ENCODE measurements at regions of chr17 and their contacts with region 1.

Region 1: GRCh38 chr17:50397111-50397918 is at the start of gene LRRC59:
- DNase-seq: peak; percentile 99
- H3K4me3 ChIP-seq: peak within 1 kb of the TSS; percentile 91 to 99
- H3K27ac ChIP-seq: peak within 1 kb of the TSS; percentile 74 to 83
- H3K4me1 ChIP-seq: peaks cover 10 to 23% of the 10 kb centered on the region in 2 experiments
- H3K27me3 ChIP-seq: no peaks in the 10 kb centered on the region; the same call in 1 of the 2 replicates
- CTCF ChIP-seq: peak; percentile 95
- EP300 ChIP-seq: no peak
- RAD21 ChIP-seq: peak; percentile 42; the same call in 1 of the 2 replicates
- polyA plus RNA-seq, gene LRRC59: 122 and 137 TPM in 2 replicates

Region 2: DNA sequence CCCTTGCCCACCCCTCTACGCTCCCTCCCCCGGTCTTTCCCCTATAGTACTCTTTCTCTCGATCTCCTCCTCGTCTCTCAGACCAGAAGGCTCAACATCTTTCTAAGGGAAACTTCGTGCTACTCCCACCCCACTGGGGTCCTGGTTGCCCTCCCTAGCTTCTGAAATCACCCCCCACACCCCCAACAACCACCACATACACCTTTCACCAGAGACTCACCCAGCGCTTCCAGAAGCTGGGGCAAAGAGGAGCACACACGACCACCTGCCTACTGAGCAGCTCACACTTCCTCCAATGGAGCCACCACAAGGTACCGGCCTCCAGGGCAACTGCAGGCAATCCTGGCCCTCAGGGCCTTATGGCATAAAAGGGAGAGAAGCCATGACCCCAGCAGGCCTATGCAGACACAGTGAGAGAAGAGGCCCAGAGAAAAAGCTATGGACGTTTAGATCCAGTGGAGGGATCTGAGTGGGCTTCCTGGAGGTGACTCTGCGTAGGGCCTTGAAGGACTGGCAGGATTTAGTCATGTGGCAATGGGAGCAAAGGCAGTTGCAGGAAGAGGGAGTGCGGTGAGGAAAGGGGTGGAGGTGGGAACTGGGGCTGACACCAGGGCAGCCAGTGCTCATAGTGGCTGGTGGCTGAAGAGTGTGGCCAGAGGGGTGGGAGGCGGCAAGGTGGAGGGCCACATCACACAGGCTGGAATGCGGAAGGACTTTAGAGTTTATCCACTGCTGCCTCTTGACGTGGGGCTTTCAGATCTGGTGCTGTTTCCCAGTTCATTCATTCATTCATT is 135.1 kb before region 1 on chr17:
- CTCF ChIA-PET with region 1: no interaction called
- POLR2A ChIA-PET with region 1: no interaction called
- DNase-seq: no peak
- H3K4me3 ChIP-seq: no peak overlapping the region
- H3K27ac ChIP-seq: no peak overlapping the region
- H3K4me1 ChIP-seq: peaks cover 42 to 56% of the 10 kb centered on the region in 2 experiments; a peak in 3 of 4 replicates
- H3K27me3 ChIP-seq: no peaks in the 10 kb centered on the region
- CTCF ChIP-seq: no peak
- EP300 ChIP-seq: no peak
- RAD21 ChIP-seq: no peak

Region 3: GRCh38 chr17:50297407-50297865 is 99.9 kb before region 1 on chr17:
- CTCF ChIA-PET with region 1: interaction called, 14 read pairs
- POLR2A ChIA-PET with region 1: no interaction called
- DNase-seq: peak; percentile 90
- H3K4me3 ChIP-seq: no peak overlapping the region; a peak in 1 of 4 replicates
- H3K27ac ChIP-seq: no peak overlapping the region
- H3K4me1 ChIP-seq: no peaks in the 10 kb centered on the region
- H3K27me3 ChIP-seq: no peaks in the 10 kb centered on the region
- CTCF ChIP-seq: peak; percentile 99
- EP300 ChIP-seq: no peak
- RAD21 ChIP-seq: peak; percentile 100

Region 4: DNA sequence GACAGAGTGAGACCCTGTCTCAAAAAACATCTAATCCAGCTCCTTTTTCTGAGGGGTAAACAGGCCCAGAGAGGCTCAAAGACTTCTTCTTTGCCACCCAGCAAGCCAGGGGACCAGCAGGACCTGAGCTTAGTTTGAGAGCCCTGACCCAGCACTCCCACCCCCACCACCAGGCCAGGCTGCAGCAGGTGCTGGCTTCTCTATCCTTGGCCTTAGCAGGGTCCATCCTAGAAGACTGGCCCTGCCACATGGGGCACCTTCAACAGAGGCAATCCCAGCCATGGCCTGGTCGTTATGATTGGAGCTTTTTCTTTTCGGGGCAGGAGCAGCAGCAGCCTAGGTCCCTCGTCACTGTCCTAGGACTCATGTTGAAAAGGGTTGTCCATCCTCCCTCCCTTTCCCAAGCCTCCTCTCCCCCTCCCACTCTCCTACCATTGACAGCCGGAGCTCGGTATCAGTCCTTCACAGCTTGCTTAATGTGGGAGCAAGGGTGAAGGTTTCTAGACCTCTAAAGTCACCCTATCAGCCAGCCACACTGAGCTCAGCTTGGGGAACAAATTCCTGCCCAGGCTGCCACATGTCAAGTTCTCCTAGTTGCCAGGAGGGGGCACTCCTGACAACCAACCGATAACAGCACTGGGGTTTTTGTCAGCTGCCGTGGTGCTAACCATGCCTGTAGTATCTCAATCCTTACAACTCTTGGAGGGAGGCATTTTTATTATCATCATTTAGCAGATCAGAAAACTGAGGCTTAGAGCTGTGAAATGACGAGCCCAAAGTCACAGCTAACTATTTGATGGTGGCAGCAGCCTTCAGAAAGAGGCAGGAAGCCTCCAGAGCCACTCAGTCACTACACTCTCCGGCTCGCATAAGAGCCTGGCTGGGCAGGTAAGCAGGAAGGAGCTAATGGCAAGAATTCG is 35.5 kb before region 1 on chr17:
- CTCF ChIA-PET with region 1: interaction called, 52 read pairs
- POLR2A ChIA-PET with region 1: no interaction called
- DNase-seq: peak; percentile 90
- H3K4me3 ChIP-seq: no peak overlapping the region; a peak in 1 of 4 replicates
- H3K27ac ChIP-seq: peak overlapping the region in 1 of 2 experiments; percentile 59; a peak in 2 of 4 replicates
- H3K4me1 ChIP-seq: peaks cover 9 to 25% of the 10 kb centered on the region in 2 experiments; a peak in 2 of 4 replicates
- H3K27me3 ChIP-seq: no peaks in the 10 kb centered on the region
- CTCF ChIP-seq: peak; percentile 92
- EP300 ChIP-seq: no peak
- RAD21 ChIP-seq: peak; percentile 66

Region 5: DNA sequence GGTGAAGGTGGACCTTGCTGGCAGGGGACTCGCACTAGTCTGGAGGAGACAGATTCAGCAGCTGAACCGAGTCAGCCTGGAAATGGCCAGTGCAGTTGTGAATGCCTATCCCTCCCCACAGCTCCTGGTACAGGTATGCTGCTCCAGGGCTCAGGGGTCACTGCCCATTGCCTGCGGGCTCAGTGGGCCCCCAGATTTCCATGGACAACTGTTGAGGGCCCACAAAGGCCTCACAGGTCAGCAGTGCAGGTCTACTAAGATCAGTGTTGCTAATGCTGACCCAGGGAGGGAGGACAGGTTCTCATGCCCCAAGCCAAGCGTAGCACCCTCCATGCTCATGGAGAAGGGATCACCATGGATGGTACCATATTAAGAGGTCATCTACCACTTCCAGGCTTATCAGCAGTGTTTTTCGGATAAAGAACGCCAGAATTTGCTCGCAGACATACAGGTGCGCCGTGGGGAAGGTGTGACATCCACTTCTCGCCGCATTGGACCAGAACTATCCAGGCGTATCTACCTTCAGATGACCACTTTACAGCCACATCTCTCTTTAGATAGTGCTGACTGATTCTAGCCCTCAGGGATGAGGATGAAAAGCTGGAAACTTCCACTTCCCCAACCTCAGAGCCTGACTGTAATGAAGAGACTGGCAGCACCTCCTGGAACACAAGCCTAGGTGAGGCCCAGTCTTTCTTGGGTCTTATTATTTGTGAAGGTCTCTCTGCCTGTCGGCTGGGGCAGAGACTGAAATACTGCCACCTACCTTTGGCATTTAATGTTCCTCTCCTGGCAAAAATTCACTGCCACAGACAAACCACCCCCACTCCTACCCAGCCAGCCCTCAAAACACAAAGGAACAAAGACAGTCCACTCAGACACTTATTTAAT is 16.7 kb before region 1 on chr17:
- CTCF ChIA-PET with region 1: interaction called, 47 read pairs
- POLR2A ChIA-PET with region 1: interaction called, 12 read pairs
- DNase-seq: no peak
- H3K4me3 ChIP-seq: no peak overlapping the region
- H3K27ac ChIP-seq: no peak overlapping the region; a peak in 1 of 4 replicates
- H3K4me1 ChIP-seq: peaks cover 0 to 9% of the 10 kb centered on the region in 2 experiments; a peak in 1 of 4 replicates
- H3K27me3 ChIP-seq: no peaks in the 10 kb centered on the region
- CTCF ChIP-seq: peak; percentile 28
- EP300 ChIP-seq: no peak
- RAD21 ChIP-seq: no peak

Region 6: GRCh38 chr17:50425682-50426471 is 28.6 kb after region 1 on chr17 and contains the start of gene ACSF2:
- CTCF ChIA-PET with region 1: interaction called, 33 read pairs
- POLR2A ChIA-PET with region 1: interaction called, 7 read pairs
- DNase-seq: peak; percentile 94
- H3K4me3 ChIP-seq: peak within 1 kb of the TSS; percentile 69 to 71
- H3K27ac ChIP-seq: peak within 1 kb of the TSS; percentile 74 to 81
- H3K4me1 ChIP-seq: peaks cover 21 to 23% of the 10 kb centered on the region in 2 experiments; a peak in 3 of 4 replicates
- H3K27me3 ChIP-seq: no peaks in the 10 kb centered on the region
- CTCF ChIP-seq: no peak
- EP300 ChIP-seq: 0 out of 4 replicates have a peak, but pooled peaks of 1 of the 2 experiments have one; percentile 15
- RAD21 ChIP-seq: no peak
- polyA plus RNA-seq, gene ACSF2: 46.6 and 49.5 TPM in 2 replicates

Region 7: GRCh38 chr17:50440172-50440837 is 43.0 kb after region 1 on chr17:
- CTCF ChIA-PET with region 1: interaction called, 33 read pairs
- POLR2A ChIA-PET with region 1: no interaction called
- DNase-seq: no peak
- H3K4me3 ChIP-seq: no peak overlapping the region
- H3K27ac ChIP-seq: no peak overlapping the region
- H3K4me1 ChIP-seq: peaks cover 0 to 10% of the 10 kb centered on the region in 2 experiments; a peak in 1 of 4 replicates
- H3K27me3 ChIP-seq: no peaks in the 10 kb centered on the region
- CTCF ChIP-seq: no peak
- EP300 ChIP-seq: no peak
- RAD21 ChIP-seq: no peak

Region 8: DNA sequence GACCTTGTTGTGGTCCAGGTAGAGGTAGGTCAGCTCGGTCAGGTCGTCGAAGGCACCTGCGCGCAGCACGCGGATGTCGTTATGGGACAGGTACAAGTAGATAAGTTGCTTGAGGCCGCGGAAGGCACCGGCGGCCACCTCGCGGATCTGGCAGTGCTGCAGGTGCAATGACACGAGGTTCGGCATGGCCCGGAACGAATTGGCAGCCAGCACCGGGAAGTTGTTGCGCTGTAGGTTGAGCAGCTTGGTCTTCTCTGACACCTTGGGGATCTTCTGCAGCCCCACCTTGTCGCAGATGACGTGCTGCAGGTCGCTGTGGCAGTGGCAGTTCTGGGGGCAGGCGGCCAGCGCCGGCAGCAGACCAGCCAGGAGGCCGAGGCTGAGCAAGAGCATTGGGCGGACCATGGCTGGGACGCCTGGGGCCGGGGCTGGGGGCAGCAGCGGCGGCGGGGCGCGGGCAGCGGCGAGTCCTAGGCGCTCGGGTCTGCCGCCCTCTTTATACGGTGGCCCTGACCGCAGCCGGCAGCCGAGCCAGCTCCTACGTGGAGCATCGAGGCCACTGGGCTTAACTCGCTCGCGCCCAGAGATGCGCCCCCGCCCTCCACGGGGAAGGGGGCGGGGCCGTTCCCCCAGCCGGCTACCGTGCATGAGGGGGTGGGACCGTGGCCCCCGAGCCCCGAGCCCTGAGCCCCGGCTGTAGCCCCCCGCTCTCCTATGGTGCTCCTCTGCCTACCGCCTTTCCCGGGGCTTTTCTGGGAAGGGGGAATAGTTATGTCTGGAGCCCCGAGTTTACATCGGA is 71.3 kb after region 1 on chr17 and contains the start of gene CHAD:
- CTCF ChIA-PET with region 1: interaction called, 27 read pairs
- POLR2A ChIA-PET with region 1: interaction called, 3 read pairs
- DNase-seq: peak; percentile 87
- H3K4me3 ChIP-seq: peak within 1 kb of the TSS in 1 of 2 experiments; percentile 41; a peak in 2 of 4 replicates
- H3K27ac ChIP-seq: no peak within 1 kb of the TSS
- H3K4me1 ChIP-seq: peaks cover 0 to 17% of the 10 kb centered on the region in 2 experiments; a peak in 1 of 4 replicates
- H3K27me3 ChIP-seq: no peaks in the 10 kb centered on the region
- CTCF ChIP-seq: no peak
- EP300 ChIP-seq: no peak
- RAD21 ChIP-seq: no peak
- polyA plus RNA-seq, gene CHAD: not detected in 2 replicates

Measured in SK-N-SH (cell line).